ENCODE measurements at regions of chr2 and their contacts with region 1.

Region 1: DNA sequence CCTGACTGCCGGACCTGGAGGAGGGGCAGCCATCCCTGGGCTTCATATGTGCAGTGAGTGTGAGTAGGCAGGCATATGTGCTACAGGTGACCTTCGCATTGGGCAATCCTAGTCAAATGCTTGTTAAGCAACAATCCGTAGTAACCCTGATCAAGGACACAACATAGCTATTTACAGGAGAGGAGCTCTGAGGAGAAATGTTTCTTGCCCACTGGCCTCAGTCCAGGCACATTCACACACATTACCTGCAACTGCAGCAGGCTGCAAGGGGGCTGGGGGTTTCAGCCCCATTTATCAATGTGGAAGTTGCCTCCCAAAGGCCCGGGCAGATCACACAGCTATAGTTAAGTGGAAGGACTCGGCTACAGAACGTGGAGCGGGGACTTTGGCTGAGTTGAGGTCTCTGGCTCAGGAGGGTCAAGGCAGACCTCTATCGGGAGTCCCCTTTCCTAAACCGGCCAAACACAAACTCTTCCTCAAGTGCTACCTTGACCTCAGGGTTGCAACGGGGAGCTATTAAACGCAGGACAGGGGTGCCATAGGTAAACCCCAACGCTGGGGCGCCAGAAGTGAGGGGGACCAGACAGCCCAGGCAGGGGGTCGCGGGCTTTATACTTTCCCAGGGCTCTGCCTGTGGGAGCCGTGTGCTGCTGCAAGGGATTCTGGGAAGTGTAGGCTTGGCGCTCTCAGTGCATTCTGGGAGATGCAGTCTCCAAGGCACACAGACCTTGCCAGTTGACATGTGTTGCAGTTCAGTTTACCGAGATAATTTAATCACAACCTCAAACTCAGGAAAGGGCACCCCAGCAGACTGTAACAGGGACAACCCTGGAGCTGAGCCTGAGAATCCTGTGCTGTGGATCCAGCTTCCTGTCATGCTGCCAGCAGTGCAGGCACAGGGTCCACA is 9.4 kb downstream of the KHK start:
- DNase-seq: no peak
- H3K4me3 ChIP-seq: peak overlapping the region in 3 of 4 donors; percentile 26 to 57 (median 32)
- H3K27ac ChIP-seq: no peak overlapping the region
- H3K4me1 ChIP-seq: peaks cover 6 to 11% (median 8%) of the 10 kb centered on the region in 3 donors
- H3K27me3 ChIP-seq: no peaks in the 10 kb centered on the region
- CTCF ChIP-seq: peak in 1 of 6 experiments; percentile 20
- POLR2A ChIP-seq: no peak

Region 2: DNA sequence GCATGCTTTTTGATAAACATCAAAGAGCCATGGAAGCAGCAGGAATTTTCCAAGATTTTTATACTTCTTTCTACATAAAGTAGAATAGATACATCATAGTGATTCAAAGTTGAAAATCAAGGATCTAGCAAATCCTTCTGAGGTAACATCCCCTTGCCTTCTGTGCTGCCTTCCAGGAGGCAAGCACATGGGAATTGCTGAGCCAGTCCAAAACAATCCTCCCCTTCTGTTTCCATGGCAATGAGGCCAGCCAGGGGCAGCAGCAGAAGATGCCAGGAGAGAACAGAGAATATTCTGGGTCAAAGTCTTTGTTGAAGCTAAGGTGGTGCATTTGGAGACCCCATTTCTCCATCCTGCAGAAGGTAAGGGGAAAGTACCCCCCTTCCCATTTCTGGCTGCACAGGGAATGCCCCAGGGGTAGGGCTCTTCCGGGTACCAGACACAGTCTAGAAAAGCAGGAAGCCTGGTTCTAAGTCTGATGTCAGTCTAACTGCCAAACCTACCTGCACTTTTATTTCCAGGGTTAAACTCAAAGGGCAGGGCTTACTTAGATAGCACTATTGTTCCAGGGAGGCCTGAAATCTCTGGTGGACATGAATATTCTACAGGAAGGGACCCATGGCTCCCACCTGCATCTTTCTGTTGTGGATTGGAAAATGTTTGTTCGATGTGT is 288.1 kb before region 1 on chr2:
- intact Hi-C with region 1: no loop called
- DNase-seq: no peak
- H3K4me3 ChIP-seq: no peak overlapping the region
- H3K27ac ChIP-seq: no peak overlapping the region
- H3K4me1 ChIP-seq: peaks cover 0 to 5% (median 0%) of the 10 kb centered on the region in 3 donors
- H3K27me3 ChIP-seq: peaks cover 0 to 24% (median 0%) of the 10 kb centered on the region in 4 donors
- CTCF ChIP-seq: no peak
- POLR2A ChIP-seq: no peak

Region 3: DNA sequence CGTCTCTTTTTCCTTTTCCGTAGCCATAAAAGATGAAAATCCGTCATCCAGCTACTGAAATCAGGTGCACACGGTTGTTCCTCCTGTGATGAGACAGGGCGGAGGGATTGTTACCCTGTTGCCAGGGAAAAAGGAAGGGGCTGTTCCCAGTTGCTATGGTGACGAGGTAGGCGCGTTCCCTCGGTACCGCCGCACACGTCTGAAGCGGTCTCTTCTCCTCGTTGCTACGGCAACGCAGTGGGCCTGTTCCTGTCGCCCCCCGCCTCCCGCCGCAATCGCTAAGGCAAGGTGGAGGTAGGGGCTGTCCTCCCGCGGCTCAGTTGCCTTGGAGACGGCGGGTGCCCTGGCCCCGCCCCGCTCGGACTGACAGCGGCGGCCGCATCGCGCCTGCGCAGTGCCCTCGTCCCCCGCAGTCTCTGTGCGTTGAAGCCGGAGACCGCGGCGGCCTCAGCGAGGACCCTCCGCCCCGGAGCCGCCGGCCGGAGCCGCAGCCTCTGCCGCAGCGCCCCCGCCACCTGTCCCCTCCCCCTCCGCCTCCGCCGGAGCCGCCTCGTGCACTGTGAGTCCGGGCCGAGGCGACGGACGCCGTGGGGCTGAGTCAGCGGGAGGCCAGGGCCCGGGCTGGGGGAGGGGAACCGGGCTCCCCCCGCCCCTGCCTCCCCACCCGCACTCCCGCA is 125.6 kb before region 1 on chr2 and contains the start of gene MAPRE3:
- intact Hi-C with region 1: no loop called
- DNase-seq: no peak
- H3K4me3 ChIP-seq: peak within 1 kb of the TSS; percentile 54 to 86 (median 70)
- H3K27ac ChIP-seq: peak within 1 kb of the TSS; percentile 71 to 86 (median 84)
- H3K4me1 ChIP-seq: peaks cover 16 to 32% (median 17%) of the 10 kb centered on the region in 3 donors
- H3K27me3 ChIP-seq: peaks cover 0 to 20% (median 0%) of the 10 kb centered on the region in 4 donors
- CTCF ChIP-seq: peak in 1 of 6 experiments; percentile 6
- POLR2A ChIP-seq: peak in 1 of 4 donors; percentile 14
- total RNA-seq, gene MAPRE3: 4.4 to 7.6 (median 5.2) TPM

Region 4: DNA sequence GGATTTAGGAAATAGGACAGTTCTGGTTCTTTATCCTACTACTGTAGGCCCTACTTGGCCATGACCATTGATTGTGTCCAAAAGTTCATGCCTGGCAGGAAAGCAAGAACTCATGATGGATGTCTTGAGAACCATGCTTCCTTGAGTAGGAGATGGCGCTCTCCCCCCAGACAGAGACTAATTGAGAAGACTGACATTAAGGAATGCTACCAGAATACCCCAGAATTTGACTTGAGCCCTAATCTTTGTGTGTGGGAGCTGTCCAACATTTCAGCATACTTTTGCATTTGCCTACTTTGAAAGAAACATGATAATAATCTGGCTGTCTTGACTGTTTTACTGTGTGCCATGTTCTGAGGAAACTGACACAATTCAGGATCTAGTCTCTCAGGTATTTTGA is 102.2 kb before region 1 on chr2:
- intact Hi-C with region 1: no loop called
- DNase-seq: no peak
- H3K4me3 ChIP-seq: no peak overlapping the region
- H3K27ac ChIP-seq: no peak overlapping the region
- H3K4me1 ChIP-seq: no peaks in the 10 kb centered on the region
- H3K27me3 ChIP-seq: no peaks in the 10 kb centered on the region
- CTCF ChIP-seq: no peak
- POLR2A ChIP-seq: no peak

Region 5: GRCh38 chr2:27303093-27304025 is 207.4 kb after region 1 on chr2:
- intact Hi-C with region 1: loop called (anchors 10 kb)
- DNase-seq: no peak
- H3K4me3 ChIP-seq: peak overlapping the region; percentile 5 to 50 (median 34)
- H3K27ac ChIP-seq: peak overlapping the region in 2 of 4 donors; percentile 1 to 36
- H3K4me1 ChIP-seq: peaks cover 16 to 33% (median 20%) of the 10 kb centered on the region in 3 donors
- H3K27me3 ChIP-seq: peaks cover 12 to 47% (median 20%) of the 10 kb centered on the region in 4 donors
- CTCF ChIP-seq: peak; percentile 83 to 91 (median 89)
- POLR2A ChIP-seq: no peak

Measured in esophagus squamous epithelium (tissue), 5 donors.